ENCODE measurements at regions of chr1 and their contacts with region 1.

Region 1: GRCh38 chr1:20786253-20787028 is 666 bp downstream of the HP1BP3 start:
- DNase-seq: peak; percentile 95
- ATAC-seq: peak; percentile 68
- H3K4me3 ChIP-seq: peak overlapping the region; percentile 98
- H3K27ac ChIP-seq: peak overlapping the region; percentile 71
- H3K4me1 ChIP-seq: peaks cover 26% of the 10 kb centered on the region
- H3K27me3 ChIP-seq: no peaks in the 10 kb centered on the region
- CTCF ChIP-seq: no peak

Region 2: GRCh38 chr1:20661207-20662109 is 125.0 kb before region 1 on chr1 and contains the start of gene DDOST:
- CTCF ChIA-PET with region 1: no interaction called
- POLR2A ChIA-PET with region 1: no interaction called
- intact Hi-C with region 1: loop called (anchors 5 kb)
- DNase-seq: peak; percentile 99
- ATAC-seq: peak; percentile 96
- H3K4me3 ChIP-seq: peak within 1 kb of the TSS; percentile 97
- H3K27ac ChIP-seq: peak within 1 kb of the TSS; percentile 24; the same call in 1 of the 2 replicates
- H3K4me1 ChIP-seq: peaks cover 8% of the 10 kb centered on the region; the same call in 1 of the 2 replicates
- H3K27me3 ChIP-seq: no peaks in the 10 kb centered on the region
- CTCF ChIP-seq: peak; percentile 39; the same call in 1 of the 2 replicates
- total RNA-seq, gene DDOST: 334 and 357 TPM in 2 replicates

Region 3: DNA sequence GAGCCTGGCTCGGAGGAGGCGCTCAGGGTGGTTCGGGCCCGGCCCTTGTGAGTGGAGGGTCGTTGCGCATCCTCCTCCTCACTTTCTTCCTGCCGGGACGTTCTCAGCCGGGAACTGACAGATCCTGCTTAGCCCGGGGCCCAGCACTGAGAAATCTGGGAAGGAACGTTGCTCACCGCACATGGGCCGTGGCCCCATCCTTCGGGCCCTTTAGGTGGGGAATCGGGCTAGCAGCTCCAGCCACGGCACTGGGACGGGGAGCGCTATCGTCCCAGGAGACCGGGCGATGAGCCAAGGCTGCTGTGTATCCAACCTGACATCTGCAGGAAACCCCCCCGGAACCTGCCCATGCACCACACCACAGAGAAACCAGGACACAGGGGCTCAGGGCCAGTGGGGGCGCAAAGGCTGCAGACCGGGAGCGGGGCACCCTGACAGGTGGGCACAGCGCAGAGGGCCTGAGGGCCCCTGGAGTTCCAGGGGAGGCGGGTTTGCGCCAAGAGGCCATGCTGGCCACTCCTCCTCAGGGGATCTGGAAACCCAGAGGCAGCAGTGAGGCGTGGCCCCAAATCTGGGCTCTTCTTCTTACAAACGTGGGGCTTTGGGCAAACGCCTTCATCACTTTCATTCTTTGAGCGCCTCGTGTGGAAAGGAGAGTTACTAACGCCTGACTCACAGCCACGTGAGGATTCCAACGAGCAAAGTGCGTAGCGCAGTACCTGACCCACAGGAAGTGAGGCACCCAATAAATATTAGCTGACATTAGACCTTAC is 53.7 kb before region 1 on chr1 and contains the start of gene SH2D5:
- CTCF ChIA-PET with region 1: no interaction called
- POLR2A ChIA-PET with region 1: interaction called, 4 read pairs
- intact Hi-C with region 1: loop called (anchors 2 kb)
- DNase-seq: peak; percentile 99
- ATAC-seq: peak; percentile 71
- H3K4me3 ChIP-seq: peak within 1 kb of the TSS; percentile 74
- H3K27ac ChIP-seq: peak within 1 kb of the TSS; percentile 97
- H3K4me1 ChIP-seq: peaks cover 22% of the 10 kb centered on the region
- H3K27me3 ChIP-seq: no peaks in the 10 kb centered on the region
- CTCF ChIP-seq: peak; percentile 44; the same call in 1 of the 2 replicates
- total RNA-seq, gene SH2D5: 7.1 and 11.2 TPM in 2 replicates

Region 4: DNA sequence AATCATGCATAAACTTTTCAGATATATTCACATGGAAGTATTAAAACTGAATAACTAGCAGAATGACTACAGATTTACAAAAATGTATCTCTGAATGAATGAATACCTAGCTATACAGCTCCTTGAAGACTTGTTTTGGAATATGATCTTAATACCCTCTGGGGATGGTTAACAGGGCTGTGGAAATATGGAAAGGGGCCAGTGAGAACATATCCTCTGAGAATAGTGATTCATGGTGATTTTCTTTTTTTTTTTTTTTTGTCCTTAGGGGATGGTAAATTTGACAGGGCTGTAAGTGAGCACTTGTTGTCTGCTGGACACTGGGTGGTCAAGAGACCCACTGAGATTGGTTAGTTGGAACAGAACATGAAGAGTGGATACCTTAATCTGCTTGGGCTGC is 81.4 kb after region 1 on chr1:
- CTCF ChIA-PET with region 1: no interaction called
- POLR2A ChIA-PET with region 1: interaction called, 17 read pairs
- intact Hi-C with region 1: no loop called
- DNase-seq: peak; percentile 27
- ATAC-seq: peak; percentile 42
- H3K4me3 ChIP-seq: no peak overlapping the region
- H3K27ac ChIP-seq: no peak overlapping the region
- H3K4me1 ChIP-seq: peaks cover 22% of the 10 kb centered on the region; the same call in 1 of the 2 replicates
- H3K27me3 ChIP-seq: no peaks in the 10 kb centered on the region
- CTCF ChIP-seq: no peak

Region 5: DNA sequence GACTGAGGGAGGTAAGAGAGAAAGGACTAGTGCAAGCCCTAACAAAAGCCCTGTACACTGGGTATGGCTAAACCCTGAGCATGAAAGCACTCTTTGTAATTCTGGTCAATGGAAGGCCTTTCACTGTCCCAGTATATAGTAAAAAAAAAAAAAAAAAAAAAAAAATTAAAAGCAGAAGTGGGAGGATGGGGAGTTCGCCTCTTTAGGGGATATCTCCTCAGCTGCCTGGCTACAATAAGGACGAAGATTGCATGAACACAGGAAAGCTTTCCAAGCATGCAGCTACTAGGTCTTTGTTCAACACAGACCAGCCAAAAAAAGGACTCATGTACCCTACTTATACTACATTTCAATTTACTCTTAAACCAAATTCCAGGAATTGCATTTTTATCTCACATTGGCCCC is 331.2 kb after region 1 on chr1:
- CTCF ChIA-PET with region 1: no interaction called
- POLR2A ChIA-PET with region 1: interaction called, 18 read pairs
- intact Hi-C with region 1: no loop called
- DNase-seq: no peak
- ATAC-seq: no peak
- H3K4me3 ChIP-seq: no peak overlapping the region
- H3K27ac ChIP-seq: no peak overlapping the region
- H3K4me1 ChIP-seq: no peaks in the 10 kb centered on the region
- H3K27me3 ChIP-seq: no peaks in the 10 kb centered on the region
- CTCF ChIP-seq: no peak

Measured in PC-3 (cell line).